ENCODE measurements at regions of chr4 and their contacts with region 1.

Region 1: GRCh38 chr4:139099366-139099982 is 77.5 kb downstream of the ELF2 start:
- DNase-seq: peak; percentile 28
- ATAC-seq: peak; percentile 90
- H3K4me3 Mint-ChIP-seq: no peak overlapping the region
- H3K27ac Mint-ChIP-seq: no peak overlapping the region
- H3K4me1 Mint-ChIP-seq: no peaks in the 10 kb centered on the region
- H3K27me3 Mint-ChIP-seq: no peaks in the 10 kb centered on the region
- CTCF ChIP-seq: no peak

Region 2: GRCh38 chr4:139129206-139129605 is 29.7 kb after region 1 on chr4:
- CTCF ChIA-PET with region 1: no interaction called
- POLR2A ChIA-PET with region 1: no interaction called
- intact Hi-C with region 1: no loop called
- DNase-seq: no peak
- ATAC-seq: no peak
- H3K4me3 Mint-ChIP-seq: no peak overlapping the region
- H3K27ac Mint-ChIP-seq: no peak overlapping the region
- H3K4me1 Mint-ChIP-seq: no peaks in the 10 kb centered on the region
- H3K27me3 Mint-ChIP-seq: no peaks in the 10 kb centered on the region
- CTCF ChIP-seq: no peak

Region 3: DNA sequence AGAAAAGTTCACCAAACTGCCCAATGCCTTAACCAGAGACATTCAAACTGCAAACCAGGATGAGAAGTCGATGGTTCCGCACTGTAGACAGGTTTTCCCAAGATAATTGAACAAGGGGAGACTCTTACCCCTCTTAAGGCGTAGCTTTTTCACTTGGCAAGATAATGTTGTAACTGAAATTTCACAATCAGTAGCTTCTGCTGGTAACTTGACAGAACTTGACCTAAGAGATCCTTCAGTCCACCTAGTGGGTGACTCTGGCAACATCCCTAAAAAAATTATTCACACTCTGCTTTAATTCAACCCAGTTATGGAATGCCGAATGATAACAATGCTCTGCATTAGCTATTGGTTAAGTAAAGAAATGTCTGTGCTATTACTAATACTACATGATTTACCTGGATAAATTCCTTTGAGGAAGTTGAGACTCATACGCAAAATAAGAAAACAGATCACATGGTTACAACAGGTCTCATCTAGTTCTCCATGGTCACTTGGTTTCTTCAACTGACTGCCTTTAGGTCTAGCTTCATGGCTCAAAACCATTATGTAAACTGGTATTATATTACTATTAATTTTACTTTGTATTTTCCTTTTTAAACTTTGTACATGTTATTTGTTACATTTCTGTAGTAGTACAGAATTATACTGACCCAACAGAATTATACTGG is 68.4 kb after region 1 on chr4:
- CTCF ChIA-PET with region 1: interaction called, 9 read pairs
- POLR2A ChIA-PET with region 1: no interaction called
- intact Hi-C with region 1: loop called (anchors 1 kb)
- DNase-seq: no peak
- ATAC-seq: peak; percentile 28
- H3K4me3 Mint-ChIP-seq: no peak overlapping the region
- H3K27ac Mint-ChIP-seq: no peak overlapping the region
- H3K4me1 Mint-ChIP-seq: peaks cover 21% of the 10 kb centered on the region
- H3K27me3 Mint-ChIP-seq: no peaks in the 10 kb centered on the region
- CTCF ChIP-seq: no peak

Region 4: DNA sequence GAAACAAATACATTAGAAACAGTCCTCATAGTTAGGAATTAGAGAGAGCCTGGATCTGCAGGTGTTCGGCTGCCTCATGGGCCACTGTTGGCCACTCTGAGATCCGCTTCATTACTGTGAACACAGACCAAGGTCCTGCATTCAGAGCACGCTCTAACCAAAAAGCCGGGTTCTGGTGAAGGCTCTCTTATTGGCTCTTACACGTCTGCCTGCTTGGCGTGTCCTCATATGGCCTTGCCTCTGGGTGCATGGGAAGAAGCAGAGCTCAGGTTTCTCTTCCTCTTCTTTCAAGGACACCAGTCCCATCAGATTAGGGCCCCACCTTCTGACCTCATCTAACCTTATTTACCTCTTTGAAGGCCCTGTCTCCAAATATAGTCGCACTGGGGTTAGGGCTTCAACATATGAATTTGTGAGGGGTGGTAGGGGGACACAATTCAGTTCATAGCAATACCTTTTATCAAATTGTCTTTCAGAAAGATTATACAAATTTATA is 114.6 kb after region 1 on chr4:
- CTCF ChIA-PET with region 1: interaction called, 3 read pairs
- POLR2A ChIA-PET with region 1: no interaction called
- intact Hi-C with region 1: loop called (anchors 1 kb)
- DNase-seq: peak; percentile 21
- ATAC-seq: peak; percentile 99
- H3K4me3 Mint-ChIP-seq: peak overlapping the region; percentile 9
- H3K27ac Mint-ChIP-seq: peak overlapping the region; percentile 53
- H3K4me1 Mint-ChIP-seq: peaks cover 15% of the 10 kb centered on the region
- H3K27me3 Mint-ChIP-seq: no peaks in the 10 kb centered on the region
- CTCF ChIP-seq: no peak

Region 5: GRCh38 chr4:139229534-139230039 is 130.1 kb after region 1 on chr4:
- CTCF ChIA-PET with region 1: interaction called, 13 read pairs
- POLR2A ChIA-PET with region 1: no interaction called
- intact Hi-C with region 1: loop called (anchors 1 kb)
- DNase-seq: no peak
- ATAC-seq: peak; percentile 61
- H3K4me3 Mint-ChIP-seq: no peak overlapping the region
- H3K27ac Mint-ChIP-seq: no peak overlapping the region
- H3K4me1 Mint-ChIP-seq: peaks cover 3% of the 10 kb centered on the region
- H3K27me3 Mint-ChIP-seq: no peaks in the 10 kb centered on the region
- CTCF ChIP-seq: no peak

Region 6: GRCh38 chr4:139315221-139315675 is 215.8 kb after region 1 on chr4:
- CTCF ChIA-PET with region 1: no interaction called
- POLR2A ChIA-PET with region 1: no interaction called
- intact Hi-C with region 1: no loop called
- DNase-seq: no peak
- ATAC-seq: peak; percentile 81
- H3K4me3 Mint-ChIP-seq: peak overlapping the region; percentile 71
- H3K27ac Mint-ChIP-seq: peak overlapping the region; percentile 86
- H3K4me1 Mint-ChIP-seq: peaks cover 77% of the 10 kb centered on the region
- H3K27me3 Mint-ChIP-seq: no peaks in the 10 kb centered on the region
- CTCF ChIP-seq: no peak

Region 7: GRCh38 chr4:139530833-139531427 is 431.5 kb after region 1 on chr4:
- CTCF ChIA-PET with region 1: no interaction called
- POLR2A ChIA-PET with region 1: no interaction called
- intact Hi-C with region 1: loop called (anchors 1 kb)
- DNase-seq: peak; percentile 19
- ATAC-seq: peak; percentile 60
- H3K4me3 Mint-ChIP-seq: no peak overlapping the region
- H3K27ac Mint-ChIP-seq: no peak overlapping the region
- H3K4me1 Mint-ChIP-seq: peaks cover 4% of the 10 kb centered on the region
- H3K27me3 Mint-ChIP-seq: no peaks in the 10 kb centered on the region
- CTCF ChIP-seq: no peak

Measured in activated B cell treated with CpG ODN at 0.5 μM for 24 hours (primary cell).